Endothelial cell of umbilical vein (primary cell): ENCODE measurements at regions of chr13 and their contacts with region 1.

Region 1: DNA sequence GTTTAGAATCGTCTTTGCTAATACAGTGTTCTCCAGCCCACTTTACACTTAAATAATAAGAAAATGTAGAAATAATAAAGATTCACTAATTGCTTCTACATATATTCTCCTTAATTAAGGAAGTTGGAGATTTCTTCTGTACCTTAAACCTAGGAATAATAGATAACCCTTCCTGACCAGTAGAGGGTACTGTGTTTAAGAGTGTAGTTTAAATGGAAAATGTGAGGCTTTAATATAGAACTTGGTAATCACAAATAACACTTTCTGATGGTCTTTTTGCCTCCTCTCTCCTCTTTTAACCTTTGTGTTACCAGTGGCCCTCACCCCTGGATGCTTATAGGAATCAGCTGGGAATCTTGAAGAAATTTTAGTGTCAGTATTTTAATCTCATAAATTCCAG is 20.7 kb downstream of the POMP start:
- DNase-seq: peak; percentile 33
- H3K4me3 ChIP-seq: no peak overlapping the region
- H3K27ac ChIP-seq: no peak overlapping the region
- H3K4me1 ChIP-seq: no peaks in the 10 kb centered on the region
- H3K27me3 ChIP-seq: no peaks in the 10 kb centered on the region
- CTCF ChIP-seq: peak in 1 of 2 donors; percentile 18
- POLR2A ChIP-seq: no peak

Region 2: DNA sequence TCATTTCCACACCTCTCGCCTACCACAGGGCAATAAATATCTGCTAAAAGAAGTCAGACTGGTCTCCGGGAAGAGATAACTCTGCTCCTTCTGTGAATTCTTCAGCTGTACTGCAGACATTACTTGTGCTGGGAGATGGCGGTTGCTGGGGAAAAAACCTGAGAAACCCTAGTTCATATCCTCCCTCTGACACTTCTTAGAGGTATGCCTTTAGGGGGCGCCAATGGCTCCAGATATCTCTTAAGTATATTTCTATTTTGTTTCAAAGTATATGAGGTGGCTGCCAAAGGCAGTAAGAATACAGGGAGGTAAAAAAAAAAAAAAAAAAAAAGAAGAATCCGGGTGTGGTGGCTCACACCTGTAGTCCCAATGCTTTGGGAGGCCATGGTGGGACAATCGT is 366.0 kb before region 1 on chr13:
- CTCF ChIA-PET with region 1: interaction called, 5 read pairs
- POLR2A ChIA-PET with region 1: no interaction called
- dilution Hi-C with region 1: no loop called
- intact Hi-C with region 1: loop called (anchors 5 kb)
- DNase-seq: peak; percentile 66
- H3K4me3 ChIP-seq: no peak overlapping the region
- H3K27ac ChIP-seq: no peak overlapping the region
- H3K4me1 ChIP-seq: no peaks in the 10 kb centered on the region
- H3K27me3 ChIP-seq: no peaks in the 10 kb centered on the region
- CTCF ChIP-seq: peak; percentile 44 to 48
- POLR2A ChIP-seq: no peak

Region 3: GRCh38 chr13:28347456-28348371 is 331.9 kb before region 1 on chr13:
- CTCF ChIA-PET with region 1: no interaction called
- POLR2A ChIA-PET with region 1: no interaction called
- dilution Hi-C with region 1: no loop called
- intact Hi-C with region 1: no loop called
- DNase-seq: no peak
- H3K4me3 ChIP-seq: no peak overlapping the region
- H3K27ac ChIP-seq: peak overlapping the region; percentile 1
- H3K4me1 ChIP-seq: peaks cover 30% of the 10 kb centered on the region
- H3K27me3 ChIP-seq: no peaks in the 10 kb centered on the region
- CTCF ChIP-seq: no peak
- POLR2A ChIP-seq: no peak

Region 4: DNA sequence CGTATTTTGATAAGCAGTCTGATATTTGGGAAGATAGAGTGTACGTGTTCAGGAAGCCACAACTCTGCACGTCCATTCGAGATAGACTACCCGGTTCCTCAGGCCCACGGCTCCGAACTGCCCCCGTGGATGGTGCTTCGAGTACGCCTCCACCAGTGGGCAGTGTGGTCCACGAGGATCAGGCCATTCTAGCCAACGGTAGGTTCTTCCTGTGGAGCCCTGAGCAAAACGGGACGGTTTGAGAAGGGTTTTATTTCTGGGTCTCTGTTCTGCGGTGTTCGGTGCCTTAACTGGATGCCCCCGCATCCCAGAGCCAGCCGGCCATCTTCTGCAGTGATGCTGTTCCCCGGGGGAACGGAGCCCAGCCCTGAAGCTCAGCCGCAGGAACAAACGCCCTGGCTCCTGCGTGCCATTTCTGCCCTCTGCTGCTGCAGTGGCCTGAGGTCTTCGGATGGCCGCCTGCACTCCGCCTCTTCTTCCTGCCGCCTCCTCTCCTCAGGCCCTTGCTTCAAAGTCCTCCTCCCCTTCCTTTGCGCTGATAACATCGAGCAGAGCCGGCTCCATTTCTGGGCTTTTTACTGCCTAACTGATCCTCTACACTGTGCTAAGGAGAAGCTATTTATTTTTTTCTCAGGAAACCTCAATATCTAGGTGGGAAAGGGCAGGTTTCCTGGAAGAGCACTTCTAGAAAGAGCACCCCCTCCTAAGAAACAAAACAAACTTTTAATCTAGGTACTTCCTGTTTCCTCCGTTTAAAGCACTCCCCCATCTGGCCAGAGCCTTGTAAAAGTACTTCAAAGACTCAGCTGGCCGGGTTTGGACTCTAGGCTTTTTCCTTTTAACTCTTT is 75.3 kb after region 1 on chr13:
- CTCF ChIA-PET with region 1: interaction called, 6 read pairs
- POLR2A ChIA-PET with region 1: no interaction called
- dilution Hi-C with region 1: no loop called
- intact Hi-C with region 1: loop called (anchors 2 kb)
- DNase-seq: peak; percentile 59
- H3K4me3 ChIP-seq: peak overlapping the region in 2 of 3 experiments; percentile 1 to 9
- H3K27ac ChIP-seq: no peak overlapping the region
- H3K4me1 ChIP-seq: peaks cover 30% of the 10 kb centered on the region
- H3K27me3 ChIP-seq: no peaks in the 10 kb centered on the region
- CTCF ChIP-seq: peak; percentile 4 to 13
- POLR2A ChIP-seq: no peak